Posterior vena cava (tissue), 2 donors: ENCODE measurements at regions of chr10 and their contacts with region 1.

Region 1: GRCh38 chr10:18497964-18498363 is 153.4 kb downstream of the NSUN6 start:
- DNase-seq: no peak

Region 2: DNA sequence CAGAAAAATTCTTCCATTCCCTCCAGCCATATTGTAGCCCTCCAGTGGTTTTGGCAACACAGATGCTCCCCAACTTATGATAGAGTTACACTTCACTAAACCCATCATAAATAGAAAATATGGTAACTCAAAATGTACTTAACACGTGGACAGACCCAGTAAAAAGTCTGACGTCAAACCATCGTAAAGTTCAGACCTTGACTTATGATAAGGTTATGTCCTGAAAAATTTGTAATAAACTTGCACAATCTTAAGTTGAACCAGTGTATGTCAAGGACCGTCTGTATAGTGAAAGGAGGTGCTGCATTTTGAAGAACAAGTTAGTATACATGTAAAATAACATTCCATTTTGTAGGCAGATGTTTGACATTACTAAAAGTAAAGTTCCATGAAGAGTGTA is 10.6 kb after region 1 on chr10:
- intact Hi-C with region 1: loop called in 1 of 2 experiments (anchors 2 kb)
- DNase-seq: no peak